Aorta (tissue), 5 donors: ENCODE measurements at regions of chr7 and their contacts with region 1.

Region 1: GRCh38 chr7:131654668-131655326 is 98.4 kb upstream of the PODXL start:
- DNase-seq: peak; percentile 88 to 96
- ATAC-seq: peak; percentile 88
- H3K4me3 ChIP-seq: no peak overlapping the region
- H3K27ac ChIP-seq: no peak overlapping the region
- H3K4me1 ChIP-seq: no peaks in the 10 kb centered on the region
- H3K27me3 ChIP-seq: no peaks in the 10 kb centered on the region

Region 2: DNA sequence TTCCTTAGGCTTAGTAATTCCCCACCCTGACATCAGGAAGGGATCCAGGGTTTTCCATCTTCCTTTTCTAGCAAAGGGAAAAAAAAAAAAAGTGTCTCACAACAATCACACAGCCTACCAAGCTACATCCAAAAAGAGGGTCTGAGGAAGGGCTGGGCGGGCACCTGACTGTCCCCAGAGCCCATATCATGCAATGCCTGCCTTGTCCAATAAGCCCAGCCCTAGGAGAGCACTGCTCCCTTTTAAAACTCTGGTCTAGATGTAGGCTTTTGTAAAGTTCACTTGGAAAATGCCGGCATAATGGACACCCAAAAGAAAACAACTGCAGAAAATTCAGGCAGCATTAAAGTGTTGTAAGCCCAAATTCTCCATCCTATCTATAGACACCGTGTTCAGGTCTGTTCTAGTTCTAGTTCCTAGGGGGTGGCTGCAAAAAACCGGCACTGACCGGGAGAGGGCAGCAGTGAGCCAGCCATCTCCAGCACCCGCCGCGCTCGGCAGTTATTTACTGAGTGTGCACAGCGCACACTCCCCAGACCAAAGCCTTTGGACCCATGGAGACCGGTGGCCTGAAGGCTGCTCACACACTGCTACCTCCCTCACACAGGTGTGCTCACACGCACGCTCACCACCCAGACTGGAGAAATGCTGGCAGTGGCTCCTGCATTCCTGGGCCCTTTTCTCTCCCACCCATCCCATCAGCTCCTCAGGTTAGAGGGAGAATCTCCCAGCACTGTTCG is 147.0 kb before region 1 on chr7:
- intact Hi-C with region 1: loop called (anchors 1 to 2 kb)
- DNase-seq: peak; percentile 90 to 95
- ATAC-seq: peak; percentile 88
- H3K4me3 ChIP-seq: no peak overlapping the region
- H3K27ac ChIP-seq: no peak overlapping the region
- H3K4me1 ChIP-seq: no peaks in the 10 kb centered on the region
- H3K27me3 ChIP-seq: no peaks in the 10 kb centered on the region

Region 3: DNA sequence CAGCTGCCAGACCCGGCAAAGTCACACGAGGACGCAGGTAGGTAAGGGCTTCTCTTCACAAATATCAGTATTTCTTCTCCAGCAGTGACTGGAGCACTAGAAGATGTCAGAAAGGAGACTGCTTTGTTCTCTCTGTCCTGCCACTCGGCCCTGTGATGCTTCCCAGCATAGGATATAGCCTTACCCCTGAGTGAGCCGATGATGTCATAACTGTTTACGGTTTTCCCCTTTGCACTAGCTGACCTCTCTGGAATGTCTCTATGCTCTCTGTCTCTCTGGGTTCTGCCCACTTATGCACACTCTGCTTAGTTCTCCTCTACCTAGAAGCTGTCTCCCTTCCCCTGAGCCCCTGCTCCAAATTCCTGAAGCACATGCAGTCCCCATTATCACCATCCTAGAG is 69.1 kb after region 1 on chr7:
- intact Hi-C with region 1: no loop called
- DNase-seq: no peak
- ATAC-seq: no peak
- H3K4me3 ChIP-seq: no peak overlapping the region
- H3K27ac ChIP-seq: no peak overlapping the region
- H3K4me1 ChIP-seq: no peaks in the 10 kb centered on the region
- H3K27me3 ChIP-seq: no peaks in the 10 kb centered on the region

Region 4: GRCh38 chr7:131735101-131735500 is 80.3 kb after region 1 on chr7:
- intact Hi-C with region 1: no loop called
- DNase-seq: no peak
- ATAC-seq: no peak
- H3K4me3 ChIP-seq: no peak overlapping the region
- H3K27ac ChIP-seq: no peak overlapping the region
- H3K4me1 ChIP-seq: no peaks in the 10 kb centered on the region
- H3K27me3 ChIP-seq: no peaks in the 10 kb centered on the region